CD4-positive, alpha-beta T cell (primary cell): ENCODE measurements at regions of chr1 and their contacts with region 1.

Region 1: DNA sequence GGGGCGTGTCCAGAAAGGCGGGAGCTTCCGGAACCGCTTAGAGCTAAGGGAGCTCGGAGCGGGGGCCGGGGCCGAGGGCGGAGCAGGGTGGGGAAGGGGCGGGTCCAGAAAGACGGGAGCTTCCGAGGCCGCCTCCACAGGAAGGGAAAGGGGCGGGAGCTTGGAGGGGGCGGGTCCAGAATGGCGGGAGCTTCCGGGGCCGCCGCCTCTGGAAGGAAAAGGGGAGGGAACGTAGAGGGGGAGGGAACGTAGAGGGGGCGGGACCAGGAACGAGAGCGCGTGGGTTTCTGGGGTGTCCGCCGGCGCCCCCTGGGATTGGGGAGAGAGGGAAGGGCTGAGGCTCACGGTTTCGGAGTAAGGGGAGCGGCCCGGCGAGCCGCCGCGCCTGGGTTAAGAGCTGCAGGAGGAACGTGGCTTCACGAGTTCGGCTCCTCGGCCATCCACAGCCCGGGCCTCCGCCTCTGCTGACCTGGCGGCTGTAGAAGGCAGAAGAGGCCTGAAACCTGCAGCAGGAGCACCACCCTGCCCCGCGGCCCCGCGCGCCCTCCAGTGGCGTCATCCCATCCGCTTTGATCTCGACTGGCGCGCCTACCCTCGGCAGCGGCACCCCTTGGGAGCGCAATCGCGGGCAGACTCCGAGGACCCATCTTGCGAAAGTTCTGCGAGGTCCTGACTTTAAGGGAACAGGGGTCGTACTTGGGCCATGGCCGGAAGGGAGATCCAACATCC is 22.9 kb upstream of the HPDL start:
- DNase-seq: peak; percentile 96 to 100 (median 98)
- ATAC-seq: peak; percentile 85
- H3K4me3 ChIP-seq: peak overlapping the region; percentile 84
- H3K4me3 Mint-ChIP-seq: peak overlapping the region; percentile 95
- H3K27ac ChIP-seq: peak overlapping the region; percentile 67 to 95
- H3K27ac Mint-ChIP-seq: peak overlapping the region; percentile 95
- H3K4me1 ChIP-seq: peaks cover 24% of the 10 kb centered on the region
- H3K4me1 Mint-ChIP-seq: peaks cover 30% of the 10 kb centered on the region
- H3K27me3 ChIP-seq: no peaks in the 10 kb centered on the region
- H3K27me3 Mint-ChIP-seq: no peaks in the 10 kb centered on the region
- CTCF ChIP-seq: peak; percentile 84

Region 2: DNA sequence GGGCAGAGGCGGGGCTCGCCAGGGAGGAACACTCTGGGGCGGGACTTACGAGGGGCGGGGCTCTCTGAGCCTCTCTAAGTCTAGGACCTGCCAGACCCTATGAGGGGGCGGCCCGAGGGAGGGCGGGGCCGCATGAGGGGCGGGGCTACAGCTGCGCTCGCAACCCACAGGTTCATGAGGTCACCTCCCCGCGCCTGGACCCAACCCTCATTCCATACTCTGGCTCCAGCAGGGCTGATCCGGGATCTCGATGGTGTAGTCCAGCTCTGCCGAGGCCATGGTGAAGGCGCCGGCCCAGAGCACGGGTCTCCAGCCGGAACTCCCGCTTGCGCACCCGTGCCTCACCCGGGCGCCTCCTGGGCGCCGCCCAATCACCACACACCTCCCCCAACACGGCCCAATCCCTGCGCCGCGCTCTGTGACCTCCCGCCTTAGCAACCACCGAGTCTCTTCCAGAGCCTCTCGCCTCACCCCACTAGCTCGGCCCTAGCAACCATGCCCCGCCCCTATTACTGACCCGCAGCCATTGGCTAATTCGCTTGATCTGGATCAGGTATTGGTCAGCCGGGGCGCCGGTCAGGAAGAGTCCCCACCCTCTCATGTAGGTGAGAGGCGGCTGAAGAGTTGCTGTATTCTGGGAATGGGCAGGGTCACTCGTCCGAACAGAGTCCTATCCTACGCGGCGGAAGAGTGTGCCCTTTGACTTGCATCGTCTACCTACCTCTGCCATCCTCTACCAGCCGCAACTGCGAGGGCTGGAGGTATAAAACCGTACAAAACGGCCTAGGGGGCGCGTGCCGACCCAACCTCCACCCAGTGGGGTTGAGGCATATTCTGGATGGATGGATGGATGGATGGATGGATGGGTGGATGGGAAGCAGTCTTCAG is 629.4 kb before region 1 on chr1 and contains the starts of genes ARMH1 and TMEM53:
- CTCF ChIA-PET with region 1: no interaction called
- POLR2A ChIA-PET with region 1: no interaction called
- intact Hi-C with region 1: loop called in 1 of 2 experiments (anchors 5 kb)
- DNase-seq: peak; percentile 91 to 99 (median 96)
- ATAC-seq: peak; percentile 90
- H3K4me3 ChIP-seq: peak within 1 kb of the TSS; percentile 86
- H3K4me3 Mint-ChIP-seq: peak within 1 kb of the TSS; percentile 93
- H3K27ac ChIP-seq: peak within 1 kb of the TSS; percentile 75 to 86
- H3K27ac Mint-ChIP-seq: peak within 1 kb of the TSS; percentile 84
- H3K4me1 ChIP-seq: peaks cover 31% of the 10 kb centered on the region
- H3K4me1 Mint-ChIP-seq: peaks cover 29% of the 10 kb centered on the region
- H3K27me3 ChIP-seq: no peaks in the 10 kb centered on the region
- H3K27me3 Mint-ChIP-seq: no peaks in the 10 kb centered on the region
- CTCF ChIP-seq: no peak
- total RNA-seq, gene ARMH1: 79.9 to 84.0 TPM
- total RNA-seq, gene TMEM53: 0.64 to 1.2 TPM

Region 3: DNA sequence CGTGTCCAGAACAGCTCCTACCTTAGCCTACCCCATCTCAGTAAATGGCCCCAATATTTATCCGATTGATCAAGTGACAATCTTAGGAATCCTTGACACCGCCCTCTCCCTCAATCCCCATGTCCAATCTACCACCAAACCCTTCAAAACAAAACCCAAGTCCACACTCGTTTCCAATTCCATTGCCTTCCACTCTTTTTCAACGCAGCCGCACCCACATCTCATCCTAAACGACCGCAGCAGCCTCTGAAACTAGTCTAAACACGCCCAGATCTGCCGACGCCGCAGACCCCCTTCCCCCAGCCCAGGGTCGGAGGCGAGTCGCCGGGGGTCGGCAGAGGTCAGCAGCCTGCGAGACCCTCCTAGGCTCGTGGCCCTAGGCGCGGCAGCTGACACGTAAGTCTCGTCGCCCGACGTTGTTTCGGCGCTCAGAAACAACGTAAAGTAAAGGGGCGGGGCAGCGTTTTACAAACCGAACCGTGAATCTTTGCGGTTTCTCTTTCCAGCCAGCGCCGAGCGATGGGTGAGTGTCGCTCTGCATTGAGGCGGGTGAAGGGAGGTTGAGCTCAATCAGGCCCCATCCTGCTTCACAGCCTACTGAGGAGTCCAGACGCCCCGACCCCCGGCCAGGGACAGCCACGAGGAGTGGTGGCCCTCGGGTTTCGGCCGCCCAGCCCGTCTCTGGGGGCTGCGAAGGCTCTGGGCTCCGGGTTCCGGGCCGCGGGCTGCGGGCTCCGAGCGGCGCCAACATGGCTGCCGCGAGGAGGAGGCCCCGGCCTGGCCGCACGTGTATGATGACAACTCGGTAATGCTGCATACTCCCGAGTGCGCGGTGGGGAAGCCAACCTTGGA is 528.4 kb before region 1 on chr1 and contains the start of gene RPS8:
- CTCF ChIA-PET with region 1: no interaction called
- POLR2A ChIA-PET with region 1: interaction called, 11 read pairs
- intact Hi-C with region 1: loop called in 1 of 2 experiments (anchors 5 kb)
- DNase-seq: peak; percentile 82 to 95 (median 86)
- ATAC-seq: peak; percentile 83
- H3K4me3 ChIP-seq: peak within 1 kb of the TSS; percentile 77
- H3K4me3 Mint-ChIP-seq: peak within 1 kb of the TSS; percentile 90
- H3K27ac ChIP-seq: peak within 1 kb of the TSS; percentile 91
- H3K27ac Mint-ChIP-seq: peak within 1 kb of the TSS; percentile 89
- H3K4me1 ChIP-seq: peaks cover 33% of the 10 kb centered on the region
- H3K4me1 Mint-ChIP-seq: peaks cover 54% of the 10 kb centered on the region
- H3K27me3 ChIP-seq: no peaks in the 10 kb centered on the region
- H3K27me3 Mint-ChIP-seq: no peaks in the 10 kb centered on the region
- CTCF ChIP-seq: no peak
- total RNA-seq, gene RPS8: 3,394 to 3,436 TPM

Region 4: DNA sequence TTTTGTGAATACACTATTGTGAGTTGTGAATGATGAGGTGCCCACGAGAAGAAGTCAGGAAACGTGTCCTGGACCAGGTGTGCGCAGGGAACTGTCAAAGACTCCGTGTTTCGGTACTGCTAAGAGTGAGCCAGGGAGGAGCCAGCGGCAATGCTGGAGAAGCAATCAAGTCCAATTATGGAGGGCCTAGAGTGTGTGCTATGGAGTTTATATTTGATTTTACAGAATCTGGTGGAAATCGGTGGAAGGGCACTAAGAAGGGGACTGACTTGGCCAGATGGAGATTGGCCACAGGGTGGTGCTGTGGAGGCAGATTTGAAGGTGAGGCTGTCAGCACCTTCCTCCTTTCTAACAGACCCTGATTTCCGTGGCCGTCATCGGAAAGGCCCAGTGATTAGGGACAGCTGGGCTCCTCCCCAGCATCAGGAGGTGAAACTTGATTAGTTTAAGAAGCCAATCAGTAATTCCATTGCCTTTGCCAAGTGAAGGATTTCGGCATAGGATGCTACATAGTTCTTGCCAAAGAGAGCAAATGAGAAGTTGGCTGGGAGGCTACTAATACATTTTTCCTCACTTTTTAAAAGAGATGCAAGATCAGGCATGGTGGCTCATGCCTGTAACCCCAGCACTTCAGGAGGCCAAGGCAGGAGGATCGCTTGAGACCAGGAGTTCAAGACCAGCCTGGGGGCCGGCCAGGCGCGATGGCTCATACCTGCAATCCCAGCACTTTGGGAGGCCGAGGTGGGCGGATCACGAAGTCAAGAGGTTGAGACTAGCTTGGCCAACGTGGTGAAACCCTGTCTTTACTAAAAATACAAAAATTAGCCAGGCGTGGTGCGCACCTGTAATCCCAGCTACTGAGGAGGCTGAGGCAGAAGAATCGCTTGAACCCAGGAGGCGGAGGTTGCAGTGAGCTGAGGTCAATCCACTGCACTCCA is 467.7 kb before region 1 on chr1:
- CTCF ChIA-PET with region 1: no interaction called
- POLR2A ChIA-PET with region 1: interaction called, 3 read pairs
- intact Hi-C with region 1: loop called (anchors 1 to 5 kb)
- DNase-seq: peak; percentile 77 to 93 (median 84)
- ATAC-seq: peak; percentile 98
- H3K4me3 ChIP-seq: no peak overlapping the region
- H3K4me3 Mint-ChIP-seq: no peak overlapping the region
- H3K27ac ChIP-seq: no peak overlapping the region
- H3K27ac Mint-ChIP-seq: no peak overlapping the region
- H3K4me1 ChIP-seq: peaks cover 9% of the 10 kb centered on the region
- H3K4me1 Mint-ChIP-seq: peaks cover 8% of the 10 kb centered on the region
- H3K27me3 ChIP-seq: no peaks in the 10 kb centered on the region
- H3K27me3 Mint-ChIP-seq: peaks cover 11% of the 10 kb centered on the region
- CTCF ChIP-seq: peak; percentile 91

Region 5: GRCh38 chr1:45112661-45113060 is 191.1 kb before region 1 on chr1:
- CTCF ChIA-PET with region 1: no interaction called
- POLR2A ChIA-PET with region 1: no interaction called
- intact Hi-C with region 1: no loop called
- DNase-seq: no peak
- ATAC-seq: no peak
- H3K4me3 ChIP-seq: no peak overlapping the region
- H3K4me3 Mint-ChIP-seq: no peak overlapping the region
- H3K27ac ChIP-seq: no peak overlapping the region
- H3K27ac Mint-ChIP-seq: no peak overlapping the region
- H3K4me1 ChIP-seq: peaks cover 11% of the 10 kb centered on the region
- H3K4me1 Mint-ChIP-seq: peaks cover 18% of the 10 kb centered on the region
- H3K27me3 ChIP-seq: no peaks in the 10 kb centered on the region
- H3K27me3 Mint-ChIP-seq: no peaks in the 10 kb centered on the region
- CTCF ChIP-seq: no peak

Region 6: GRCh38 chr1:45326627-45327623 is 23.2 kb after region 1 on chr1 and contains the start of gene HPDL:
- CTCF ChIA-PET with region 1: interaction called, 4 read pairs
- POLR2A ChIA-PET with region 1: interaction called, 7 read pairs
- intact Hi-C with region 1: loop called in 1 of 2 experiments (anchors 1 kb)
- DNase-seq: peak; percentile 18 to 78 (median 46)
- ATAC-seq: peak; percentile 87
- H3K4me3 ChIP-seq: peak within 1 kb of the TSS; percentile 70
- H3K4me3 Mint-ChIP-seq: peak within 1 kb of the TSS; percentile 85
- H3K27ac ChIP-seq: no peak within 1 kb of the TSS
- H3K27ac Mint-ChIP-seq: no peak within 1 kb of the TSS
- H3K4me1 ChIP-seq: peaks cover 21% of the 10 kb centered on the region
- H3K4me1 Mint-ChIP-seq: peaks cover 7% of the 10 kb centered on the region
- H3K27me3 ChIP-seq: peaks cover 0 to 2% of the 10 kb centered on the region in 2 experiments
- H3K27me3 Mint-ChIP-seq: no peaks in the 10 kb centered on the region
- CTCF ChIP-seq: no peak
- total RNA-seq, gene HPDL: not detected

Region 7: GRCh38 chr1:45550401-45551351 is 246.9 kb after region 1 on chr1 and contains the start of gene AKR1A1:
- CTCF ChIA-PET with region 1: interaction called, 3 read pairs
- POLR2A ChIA-PET with region 1: interaction called, 5 read pairs
- intact Hi-C with region 1: loop called in 1 of 2 experiments (anchors 5 kb)
- DNase-seq: peak; percentile 70 to 94 (median 84)
- ATAC-seq: peak; percentile 95
- H3K4me3 ChIP-seq: peak within 1 kb of the TSS; percentile 73
- H3K4me3 Mint-ChIP-seq: peak within 1 kb of the TSS; percentile 98
- H3K27ac ChIP-seq: peak within 1 kb of the TSS; percentile 85 to 90
- H3K27ac Mint-ChIP-seq: peak within 1 kb of the TSS; percentile 89
- H3K4me1 ChIP-seq: peaks cover 27% of the 10 kb centered on the region
- H3K4me1 Mint-ChIP-seq: peaks cover 26% of the 10 kb centered on the region
- H3K27me3 ChIP-seq: no peaks in the 10 kb centered on the region
- H3K27me3 Mint-ChIP-seq: no peaks in the 10 kb centered on the region
- CTCF ChIP-seq: no peak
- total RNA-seq, gene AKR1A1: 25.3 to 31.0 TPM